Mammary epithelial cell (primary cell): ENCODE measurements at regions of chr6 and their contacts with region 1.

Region 1: GRCh38 chr6:26537846-26538571 is at the start of gene HMGN4:
- DNase-seq: peak; percentile 92
- H3K4me3 ChIP-seq: peak within 1 kb of the TSS; percentile 65 to 77 (median 76)
- H3K27ac ChIP-seq: peak within 1 kb of the TSS; percentile 91
- H3K4me1 ChIP-seq: peaks cover 21% of the 10 kb centered on the region
- H3K27me3 ChIP-seq: no peaks in the 10 kb centered on the region
- CTCF ChIP-seq: no peak
- total RNA-seq, gene HMGN4: 74.6 to 81.5 TPM

Region 2: DNA sequence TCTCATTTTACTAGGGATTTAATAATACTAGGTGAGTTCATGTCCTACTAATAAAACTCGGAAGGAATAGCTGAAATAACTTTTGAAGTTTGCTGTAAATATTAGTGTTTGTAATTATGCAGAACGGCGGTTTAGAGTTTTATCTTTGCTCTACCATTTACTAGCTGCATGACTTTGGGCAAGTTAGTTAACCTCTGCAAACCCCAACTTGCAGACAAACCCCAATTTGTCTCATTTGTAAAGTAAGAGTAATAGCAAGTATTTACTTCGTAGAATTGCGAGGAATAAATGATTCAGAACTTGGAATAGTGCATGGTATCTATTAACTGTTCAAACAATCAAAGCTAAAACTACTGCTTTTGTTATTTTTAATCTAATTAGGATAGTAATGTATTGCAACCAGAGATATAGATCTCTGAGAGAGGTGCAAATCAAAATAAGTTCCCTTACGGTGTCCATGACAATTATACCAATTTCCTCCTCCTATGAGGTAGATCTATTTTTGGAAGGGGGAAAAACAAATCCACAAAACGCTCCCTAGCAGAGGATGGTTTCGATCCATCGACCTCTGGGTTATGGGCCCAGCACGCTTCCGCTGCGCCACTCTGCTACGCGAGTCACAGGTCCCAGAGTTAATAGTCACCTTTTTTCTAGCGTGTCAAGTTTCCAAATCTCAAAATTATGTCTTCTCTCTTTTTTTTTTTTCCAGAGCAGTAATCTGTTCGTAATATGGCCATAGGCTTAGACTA is 208.1 kb before region 1 on chr6:
- CTCF ChIA-PET with region 1: interaction called, 4 read pairs
- dilution Hi-C with region 1: no loop called
- in situ Hi-C with region 1: loop called in 1 of 2 experiments (anchors 10 kb)
- intact Hi-C with region 1: loop called (anchors 1 kb)
- DNase-seq: peak; percentile 51
- H3K4me3 ChIP-seq: peak overlapping the region; percentile 56 to 98 (median 86)
- H3K27ac ChIP-seq: no peak overlapping the region
- H3K4me1 ChIP-seq: peaks cover 13% of the 10 kb centered on the region
- H3K27me3 ChIP-seq: no peaks in the 10 kb centered on the region
- CTCF ChIP-seq: no peak

Region 3: DNA sequence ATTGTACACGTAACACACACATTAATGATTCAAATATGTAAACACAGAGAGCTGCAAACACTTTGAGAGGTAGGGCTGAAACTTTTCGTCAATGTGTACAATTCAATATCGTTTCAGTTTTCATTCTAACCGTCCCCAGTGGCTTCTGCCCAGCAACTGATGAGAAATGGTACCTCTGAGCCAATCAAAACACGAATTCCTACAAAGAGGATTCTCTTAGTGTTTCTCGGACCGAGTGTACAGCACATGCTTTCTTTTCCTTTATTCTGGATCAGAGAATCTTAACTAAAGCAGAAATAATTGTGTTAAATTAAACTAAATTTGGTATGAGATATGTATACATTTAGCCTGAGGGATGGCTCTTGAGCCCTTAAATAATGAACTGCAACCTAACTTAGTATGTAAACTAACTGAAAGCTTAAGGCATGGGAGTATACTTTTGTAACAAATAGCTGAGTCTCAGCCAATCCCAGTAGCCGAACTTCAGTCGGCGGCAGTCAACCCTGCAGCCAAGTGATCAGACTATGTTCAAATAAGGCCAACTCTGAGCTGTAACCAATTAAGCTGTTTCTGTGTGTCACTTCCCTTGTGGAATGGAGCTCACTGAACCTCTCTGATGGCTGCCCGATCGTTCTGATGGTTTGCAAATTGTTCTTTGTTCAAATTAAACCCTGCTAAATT is 64.1 kb before region 1 on chr6:
- CTCF ChIA-PET with region 1: no interaction called
- dilution Hi-C with region 1: no loop called
- in situ Hi-C with region 1: no loop called
- intact Hi-C with region 1: loop called (anchors 5 kb)
- DNase-seq: peak; percentile 93
- H3K4me3 ChIP-seq: peak overlapping the region; percentile 52 to 72 (median 67)
- H3K27ac ChIP-seq: peak overlapping the region; percentile 87
- H3K4me1 ChIP-seq: peaks cover 16% of the 10 kb centered on the region
- H3K27me3 ChIP-seq: no peaks in the 10 kb centered on the region
- CTCF ChIP-seq: no peak

Region 4: DNA sequence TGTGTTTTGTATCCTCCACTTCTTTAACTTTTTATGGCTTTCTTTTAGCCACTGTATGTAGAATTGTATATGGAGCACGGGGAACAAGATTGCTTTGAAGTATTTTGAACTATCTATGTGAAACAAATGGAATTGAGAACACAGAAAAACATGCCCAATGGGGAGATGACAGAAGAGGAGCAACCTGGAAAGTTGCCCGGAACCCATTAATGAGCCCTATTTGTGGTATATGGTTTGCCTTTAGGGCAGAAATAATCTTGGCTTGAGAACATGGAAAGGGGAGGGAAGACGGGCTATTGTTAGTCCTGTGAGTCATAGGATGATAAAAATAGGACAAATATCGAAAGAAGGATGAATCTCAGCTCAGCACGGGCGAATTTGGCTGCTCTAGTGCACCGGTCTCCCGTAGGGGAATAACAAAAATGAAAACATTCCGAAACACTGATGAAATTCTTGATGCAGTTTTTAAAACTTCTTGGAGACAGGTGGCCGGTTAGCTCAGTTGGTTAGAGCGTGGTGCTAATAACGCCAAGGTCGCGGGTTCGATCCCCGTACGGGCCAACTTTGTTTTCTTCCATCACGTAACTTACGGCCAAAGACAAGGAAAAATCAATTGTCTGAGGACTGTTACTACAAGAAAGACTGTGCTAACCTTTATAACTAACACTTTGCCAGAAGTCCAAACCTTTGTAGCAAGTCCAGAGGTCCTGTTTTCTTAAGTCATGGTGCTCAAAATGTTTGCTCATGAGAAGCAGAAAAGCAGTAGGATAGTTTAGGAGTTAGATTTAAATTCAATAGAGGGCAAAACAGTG is 15.8 kb after region 1 on chr6:
- CTCF ChIA-PET with region 1: no interaction called
- dilution Hi-C with region 1: no loop called
- in situ Hi-C with region 1: no loop called
- intact Hi-C with region 1: loop called (anchors 1 kb)
- DNase-seq: peak; percentile 89
- H3K4me3 ChIP-seq: peak overlapping the region; percentile 48 to 56 (median 54)
- H3K27ac ChIP-seq: peak overlapping the region; percentile 23
- H3K4me1 ChIP-seq: peaks cover 20% of the 10 kb centered on the region
- H3K27me3 ChIP-seq: no peaks in the 10 kb centered on the region
- CTCF ChIP-seq: no peak

Region 5: GRCh38 chr6:26596579-26597388 is 58.8 kb after region 1 on chr6 and contains the start of gene ABT1:
- CTCF ChIA-PET with region 1: interaction called, 3 read pairs
- dilution Hi-C with region 1: no loop called
- in situ Hi-C with region 1: no loop called
- intact Hi-C with region 1: loop called (anchors 1 kb)
- DNase-seq: peak; percentile 98
- H3K4me3 ChIP-seq: peak within 1 kb of the TSS; percentile 61 to 99 (median 89)
- H3K27ac ChIP-seq: peak within 1 kb of the TSS; percentile 68
- H3K4me1 ChIP-seq: peaks cover 19% of the 10 kb centered on the region
- H3K27me3 ChIP-seq: no peaks in the 10 kb centered on the region
- CTCF ChIP-seq: no peak
- total RNA-seq, gene ABT1: 14.2 to 15.9 TPM